ENCODE measurements at regions of chr6 and their contacts with region 1.

Region 1: DNA sequence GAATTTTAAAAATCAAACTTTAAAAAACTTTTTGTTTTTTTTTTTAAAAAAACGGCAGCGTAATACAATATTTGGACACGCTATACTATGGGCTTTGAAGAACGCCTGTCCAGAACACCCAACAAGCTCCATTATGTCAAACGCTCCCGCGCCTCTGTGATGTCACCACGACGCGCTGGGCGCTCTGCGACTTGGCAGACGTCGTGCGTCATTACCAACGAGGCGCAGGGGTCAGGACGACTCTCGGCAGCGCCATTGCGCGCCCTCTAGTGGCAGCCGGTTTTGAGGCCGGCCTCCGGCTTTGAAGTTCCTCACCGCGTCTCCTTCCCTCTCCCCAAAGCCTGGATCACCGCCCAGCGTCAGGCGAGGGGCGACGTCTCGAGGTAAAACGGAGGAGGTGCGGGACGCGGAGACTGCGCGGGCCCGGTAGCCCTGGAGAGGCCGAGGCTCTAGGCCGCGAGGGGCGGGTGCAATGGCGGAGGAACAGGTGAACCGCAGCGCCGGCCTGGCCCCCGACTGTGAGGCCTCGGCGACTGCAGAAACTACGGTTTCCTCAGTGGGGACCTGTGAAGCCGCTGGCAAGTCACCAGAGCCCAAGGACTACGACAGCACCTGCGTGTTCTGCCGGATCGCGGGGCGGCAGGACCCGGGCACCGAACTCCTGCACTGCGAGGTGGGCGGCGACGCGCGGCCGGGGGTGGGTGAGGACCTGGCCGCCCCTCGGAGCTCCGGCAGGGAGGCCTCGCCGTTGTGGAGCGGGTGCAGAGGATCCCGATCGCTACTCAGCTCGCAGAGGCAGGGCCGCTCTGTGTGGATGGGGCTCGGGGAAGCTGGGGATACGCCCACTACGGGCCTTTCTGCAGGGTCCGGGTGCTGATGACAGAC is at the start of gene HINT3:
- DNase-seq: peak; percentile 99 to 100 (median 99)
- ATAC-seq: peak; percentile 97
- H3K4me3 ChIP-seq: peak within 1 kb of the TSS; percentile 60
- H3K27ac ChIP-seq: peak within 1 kb of the TSS; percentile 74
- H3K4me1 ChIP-seq: peaks cover 2% of the 10 kb centered on the region
- H3K27me3 ChIP-seq: no peaks in the 10 kb centered on the region
- total RNA-seq, gene HINT3: 27.4 to 31.0 (median 28.3) TPM

Region 2: DNA sequence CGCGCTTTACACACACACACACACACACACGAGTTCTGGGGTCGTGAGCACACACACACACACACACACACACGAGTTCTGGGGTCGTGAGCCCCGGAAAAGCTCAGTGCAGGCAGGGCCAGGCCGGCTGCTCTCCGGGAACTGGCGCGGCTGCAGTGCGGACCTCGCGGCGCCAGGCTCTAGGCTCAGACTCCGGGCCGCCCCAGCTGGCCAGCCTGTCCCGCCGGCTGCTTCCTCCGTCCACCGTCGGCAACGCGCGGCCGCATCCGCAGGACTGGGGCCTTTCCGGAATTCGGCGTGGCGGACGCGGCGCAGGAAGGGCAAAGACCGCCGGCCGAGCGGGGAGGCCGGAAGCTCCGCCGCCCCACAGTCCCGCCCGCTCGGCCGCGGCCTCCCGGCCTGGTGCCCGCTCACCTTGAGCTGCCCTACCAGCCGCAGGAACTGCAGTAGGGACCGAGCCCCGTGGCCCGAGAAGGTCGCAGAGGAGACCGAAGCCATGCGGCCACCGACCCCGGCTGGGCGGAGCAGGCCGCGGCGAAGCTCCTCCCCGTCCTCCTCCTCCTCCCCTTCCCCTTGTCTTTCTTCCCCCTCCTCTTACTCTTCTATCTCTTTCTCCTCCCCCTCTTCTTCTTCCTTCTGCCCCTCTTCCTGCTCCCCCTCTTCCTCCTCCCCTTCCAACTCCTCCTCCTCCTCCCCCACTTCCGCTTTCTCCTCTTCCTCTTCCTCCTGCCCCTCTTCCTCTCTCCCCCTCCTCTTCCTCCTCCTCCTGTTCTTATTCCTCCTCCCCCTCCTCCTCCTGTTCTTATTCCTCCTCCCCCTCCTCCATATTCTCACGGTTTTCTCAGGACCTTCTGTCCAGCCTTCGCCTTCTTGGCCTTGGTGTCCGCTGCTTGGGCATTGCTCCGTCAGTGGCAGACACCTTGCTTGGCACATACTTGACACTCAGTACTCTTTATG is 655.0 kb before region 1 on chr6 and contains the start of gene HDDC2:
- intact Hi-C with region 1: loop called in 1 of 4 experiments (anchors 10 kb)
- DNase-seq: peak; percentile 81 to 92 (median 92)
- ATAC-seq: peak; percentile 94 to 96
- H3K4me3 ChIP-seq: peak within 1 kb of the TSS; percentile 56
- H3K27ac ChIP-seq: peak within 1 kb of the TSS; percentile 61
- H3K4me1 ChIP-seq: no peaks in the 10 kb centered on the region
- H3K27me3 ChIP-seq: no peaks in the 10 kb centered on the region
- total RNA-seq, gene HDDC2: 83.0 to 103 (median 93.7) TPM

Region 3: DNA sequence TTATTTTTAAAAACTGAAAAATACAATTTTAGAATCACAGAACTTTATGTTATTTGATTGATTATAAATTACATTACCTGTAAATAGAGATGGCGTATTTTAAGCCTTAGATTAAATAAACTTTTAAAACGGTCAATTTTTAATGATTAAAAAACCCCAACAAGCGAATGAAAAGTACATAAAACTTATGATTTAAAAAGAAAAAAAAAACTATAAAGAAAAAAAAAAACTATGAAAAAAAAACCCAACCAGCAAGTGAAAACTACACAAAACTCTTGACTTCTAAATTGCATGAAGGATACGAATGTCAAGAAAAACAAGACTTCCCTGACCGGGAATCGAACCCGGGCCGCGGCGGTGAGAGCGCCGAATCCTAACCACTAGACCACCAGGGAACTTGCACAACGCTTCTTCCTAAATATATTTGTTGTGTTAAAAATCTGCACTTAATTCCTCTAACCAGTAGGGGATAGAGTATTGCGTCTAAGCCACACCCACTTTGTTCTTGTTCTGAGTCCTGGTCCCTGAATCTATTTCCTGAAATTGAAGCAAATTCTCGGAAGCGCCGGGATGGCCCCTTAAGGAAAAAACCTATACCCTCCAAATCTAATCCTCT is 176.7 kb before region 1 on chr6:
- intact Hi-C with region 1: loop called in 2 of 4 experiments (anchors 5 kb)
- DNase-seq: peak; percentile 75 to 91 (median 88)
- ATAC-seq: peak; percentile 97 to 98
- H3K4me3 ChIP-seq: peak overlapping the region; percentile 90
- H3K27ac ChIP-seq: peak overlapping the region; percentile 96
- H3K4me1 ChIP-seq: no peaks in the 10 kb centered on the region
- H3K27me3 ChIP-seq: no peaks in the 10 kb centered on the region

Region 4: DNA sequence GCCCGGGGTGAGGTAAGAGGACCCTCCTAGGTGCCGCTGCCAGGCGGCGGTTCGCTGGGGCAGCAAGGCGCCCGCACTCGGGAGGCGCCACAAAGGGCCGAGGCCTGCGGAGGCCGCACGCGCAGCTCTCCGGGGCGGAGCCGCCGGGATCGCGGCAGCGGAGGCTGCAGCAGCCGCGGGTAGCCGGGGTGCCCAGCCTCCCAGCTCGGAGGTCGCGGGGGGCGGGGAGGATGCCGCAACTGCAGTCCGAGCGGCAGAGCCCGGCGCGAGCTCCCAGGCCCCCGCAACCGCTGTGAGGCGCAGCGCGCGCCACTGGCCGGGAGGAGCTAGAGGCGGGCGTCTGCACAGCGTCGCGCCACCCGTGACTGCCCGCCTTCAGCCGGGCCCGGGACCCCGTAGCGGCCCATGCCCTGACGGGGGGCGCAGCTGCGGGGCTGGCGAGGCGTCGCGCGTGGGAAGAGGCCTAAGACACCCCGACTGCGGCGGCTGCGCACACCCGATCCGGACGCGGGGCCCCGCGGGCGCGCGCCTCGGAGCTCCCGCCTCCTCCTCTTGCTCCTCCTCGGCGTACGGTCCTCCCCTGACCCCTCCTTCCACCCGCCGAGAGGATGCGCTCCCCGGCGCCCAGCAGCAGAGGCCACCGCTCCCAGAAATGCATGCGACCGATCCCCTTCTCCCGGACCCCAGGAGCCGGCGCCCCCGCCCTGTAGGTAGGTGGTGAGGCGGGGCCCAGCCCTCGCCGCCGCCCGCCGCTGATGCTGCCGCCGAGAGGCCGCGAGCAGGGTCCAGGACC is 166.2 kb before region 1 on chr6 and contains the start of gene NCOA7:
- intact Hi-C with region 1: loop called in 1 of 4 experiments (anchors 5 kb)
- DNase-seq: peak; percentile 85 to 94 (median 93)
- ATAC-seq: peak; percentile 96 to 97
- H3K4me3 ChIP-seq: peak within 1 kb of the TSS; percentile 89
- H3K27ac ChIP-seq: peak within 1 kb of the TSS; percentile 97
- H3K4me1 ChIP-seq: peaks cover 5% of the 10 kb centered on the region
- H3K27me3 ChIP-seq: no peaks in the 10 kb centered on the region
- total RNA-seq, gene NCOA7: 12.6 to 18.6 (median 17.0) TPM

Region 5: GRCh38 chr6:125804264-125804663 is 152.5 kb before region 1 on chr6:
- intact Hi-C with region 1: loop called in 1 of 4 experiments (anchors 10 kb)
- DNase-seq: no peak
- ATAC-seq: no peak
- H3K4me3 ChIP-seq: no peak overlapping the region
- H3K27ac ChIP-seq: no peak overlapping the region
- H3K4me1 ChIP-seq: peaks cover 3% of the 10 kb centered on the region
- H3K27me3 ChIP-seq: no peaks in the 10 kb centered on the region

Region 6: DNA sequence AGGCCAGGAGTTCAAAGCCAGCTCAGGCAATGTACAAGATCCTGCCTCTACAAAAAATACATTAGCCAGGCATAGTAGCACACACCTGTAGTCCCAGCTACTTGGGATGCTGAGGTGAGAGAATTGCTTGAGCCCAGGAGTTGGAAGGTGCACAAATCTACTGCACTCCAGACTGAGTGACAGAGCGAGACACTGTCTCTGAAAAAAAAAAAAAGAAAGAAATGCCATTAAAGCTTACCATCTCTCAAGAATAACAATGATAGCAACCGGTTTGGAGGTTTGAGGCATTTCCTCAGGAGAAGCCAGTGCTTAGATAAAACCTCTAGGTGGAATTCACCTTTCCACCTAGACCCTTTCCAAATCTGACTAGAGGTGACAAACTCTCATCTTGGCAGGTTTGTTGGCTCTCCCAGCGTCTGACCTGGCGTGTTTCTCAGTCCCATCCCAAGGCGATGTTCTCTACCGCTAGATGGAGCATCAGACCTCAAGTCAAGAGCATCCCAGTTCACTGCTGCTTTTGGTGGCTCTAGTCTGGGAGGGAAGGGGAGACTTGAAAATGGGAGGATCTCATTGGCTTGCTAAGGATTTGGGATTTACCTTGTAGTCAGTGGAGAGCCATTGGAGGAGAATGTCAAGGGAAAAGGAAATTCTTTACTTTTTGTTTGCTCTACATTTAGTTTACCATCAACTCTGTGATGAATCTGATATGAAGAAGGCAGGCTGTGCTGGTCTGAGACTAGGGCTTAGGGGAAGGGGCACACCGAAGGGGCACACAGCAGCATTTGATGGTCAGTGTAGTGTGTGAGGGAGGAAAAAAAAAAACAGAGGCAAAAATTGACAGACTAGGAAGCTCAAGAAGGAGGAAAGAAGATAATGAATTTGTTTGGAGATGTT is 98.1 kb before region 1 on chr6:
- intact Hi-C with region 1: loop called in 2 of 4 experiments (anchors 10 kb)
- DNase-seq: peak; percentile 36 to 63 (median 46)
- ATAC-seq: peak; percentile 86 to 92
- H3K4me3 ChIP-seq: no peak overlapping the region
- H3K27ac ChIP-seq: no peak overlapping the region
- H3K4me1 ChIP-seq: no peaks in the 10 kb centered on the region
- H3K27me3 ChIP-seq: no peaks in the 10 kb centered on the region

Region 7: DNA sequence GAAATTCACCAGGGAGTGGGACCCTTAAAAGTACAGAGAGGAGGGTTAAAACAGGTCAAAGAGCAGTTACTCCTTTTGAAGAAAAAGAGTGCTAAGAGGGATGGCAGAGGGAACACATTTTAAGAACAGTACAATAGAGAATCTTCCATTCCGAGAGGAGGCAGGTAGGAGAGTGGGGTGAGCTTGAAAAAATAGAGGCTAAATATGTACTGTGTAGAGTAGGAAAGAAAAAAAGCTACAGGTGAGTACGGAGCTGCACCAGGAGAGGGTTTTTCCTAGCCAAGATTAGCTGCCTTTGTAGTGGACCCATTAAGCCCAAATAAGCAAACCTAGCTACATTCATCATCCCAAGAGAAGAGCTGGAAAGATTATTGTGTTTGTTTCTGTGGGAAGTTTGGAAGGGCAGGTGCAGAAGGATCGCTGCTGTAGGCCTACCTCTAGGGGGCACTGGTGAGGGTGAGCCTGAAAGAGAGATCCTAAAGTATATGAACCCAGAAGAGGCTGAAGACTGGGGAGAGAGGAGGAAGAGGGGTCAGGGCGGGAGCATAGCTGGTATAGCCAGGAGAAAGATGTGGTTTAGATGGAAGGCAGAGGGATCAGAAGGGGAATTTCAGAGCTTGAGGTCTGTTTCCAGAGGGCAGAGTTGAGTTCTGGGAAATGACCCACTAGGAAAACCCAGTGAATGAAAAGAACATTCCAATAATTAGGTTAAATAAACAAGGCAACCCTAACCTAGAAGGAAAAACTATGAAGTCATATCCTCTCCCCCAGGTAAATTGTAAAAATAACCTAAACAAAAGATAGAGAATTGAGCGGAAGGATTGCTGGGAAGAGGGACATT is 50.4 kb before region 1 on chr6:
- intact Hi-C with region 1: loop called in 1 of 4 experiments (anchors 10 kb)
- DNase-seq: peak in 2 of 3 donors; percentile 33 to 56
- ATAC-seq: peak; percentile 68 to 74
- H3K4me3 ChIP-seq: no peak overlapping the region
- H3K27ac ChIP-seq: no peak overlapping the region
- H3K4me1 ChIP-seq: no peaks in the 10 kb centered on the region
- H3K27me3 ChIP-seq: no peaks in the 10 kb centered on the region

Region 8: DNA sequence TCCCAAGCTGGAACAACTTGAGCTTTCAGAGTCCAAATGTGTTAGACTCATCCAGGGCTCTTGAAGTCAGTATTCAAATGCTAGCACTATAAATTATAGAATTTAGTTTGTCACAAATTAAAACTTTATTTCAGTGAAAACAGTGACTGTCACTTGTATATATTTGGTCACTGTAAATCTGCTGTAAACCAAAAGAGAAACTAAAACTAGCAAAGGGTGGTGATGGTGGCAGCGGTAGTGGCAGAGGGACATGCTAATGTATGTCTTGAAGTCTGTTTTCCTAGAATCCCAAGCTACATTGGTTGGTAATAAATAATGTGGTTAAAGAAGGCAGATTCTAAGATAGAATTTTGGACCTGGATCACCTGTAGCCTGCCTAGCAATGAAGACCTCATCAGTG is 242.7 kb after region 1 on chr6:
- intact Hi-C with region 1: no loop called
- DNase-seq: no peak
- ATAC-seq: no peak
- H3K4me3 ChIP-seq: no peak overlapping the region
- H3K27ac ChIP-seq: no peak overlapping the region
- H3K4me1 ChIP-seq: no peaks in the 10 kb centered on the region
- H3K27me3 ChIP-seq: no peaks in the 10 kb centered on the region

Measured in right cardiac atrium (tissue), 5 donors.